Naive thymus-derived CD8-positive, alpha-beta T cell (primary cell): ENCODE measurements at regions of chr20 and their contacts with region 1.

Region 1: GRCh38 chr20:6012179-6012578 is 41.7 kb downstream of the LRRN4 start:
- DNase-seq: no peak
- ATAC-seq: no peak
- H3K4me3 Mint-ChIP-seq: peak overlapping the region in 1 of 10 donors; percentile 54
- H3K27ac Mint-ChIP-seq: peak overlapping the region in 7 of 10 donors; percentile 15 to 87 (median 76)
- H3K4me1 Mint-ChIP-seq: peaks cover 27 to 64% (median 55%) of the 10 kb centered on the region in 4 donors
- H3K27me3 Mint-ChIP-seq: no peaks in the 10 kb centered on the region

Region 2: DNA sequence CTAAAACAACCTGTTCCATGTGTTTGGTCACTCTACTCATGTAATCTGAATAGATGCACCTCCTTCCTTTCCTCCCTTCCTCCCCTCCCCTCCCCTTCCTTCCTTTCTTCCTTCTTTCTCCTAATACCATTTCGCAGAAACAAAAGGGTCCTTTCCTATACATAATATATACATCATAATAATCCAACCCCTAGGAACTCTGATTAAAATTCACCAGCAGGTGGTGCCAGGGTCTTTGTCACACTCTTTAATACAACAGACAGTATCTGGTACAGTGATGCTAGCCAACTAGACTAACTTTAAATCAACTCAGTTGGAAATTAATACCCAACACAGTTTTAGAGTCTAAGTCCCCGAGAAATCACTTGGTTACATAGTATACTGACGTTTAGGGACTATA is 443.2 kb before region 1 on chr20:
- POLR2A ChIA-PET with region 1: interaction called, 11 read pairs
- DNase-seq: peak in 9 of 10 donors; percentile 19 to 74 (median 57)
- ATAC-seq: peak; percentile 80 to 93
- H3K4me3 Mint-ChIP-seq: no peak overlapping the region
- H3K27ac Mint-ChIP-seq: peak overlapping the region; percentile 22 to 91 (median 54)
- H3K4me1 Mint-ChIP-seq: peaks cover 6 to 24% (median 16%) of the 10 kb centered on the region in 4 donors
- H3K27me3 Mint-ChIP-seq: no peaks in the 10 kb centered on the region

Region 3: DNA sequence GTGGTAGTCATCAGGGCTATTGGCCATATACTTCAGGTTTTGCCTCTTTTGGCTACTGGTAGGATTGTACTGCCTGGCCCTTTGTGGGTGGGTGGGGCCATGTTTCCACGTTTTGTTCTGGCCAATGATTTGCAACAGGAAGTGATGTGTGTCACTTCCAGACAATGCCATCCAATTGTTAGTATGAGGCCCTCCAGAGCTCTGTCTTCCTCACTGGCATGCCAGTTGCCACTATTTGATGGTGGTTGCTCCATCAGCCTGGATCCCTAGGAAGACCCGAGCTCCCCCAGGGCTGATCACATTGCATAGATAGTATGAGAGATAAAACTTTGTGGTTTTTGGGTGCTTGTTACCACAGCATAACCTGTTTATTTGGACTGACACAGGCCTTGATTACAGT is 49.4 kb after region 1 on chr20:
- POLR2A ChIA-PET with region 1: no interaction called
- DNase-seq: no peak
- ATAC-seq: no peak
- H3K4me3 Mint-ChIP-seq: no peak overlapping the region
- H3K27ac Mint-ChIP-seq: no peak overlapping the region
- H3K4me1 Mint-ChIP-seq: peaks cover 0 to 8% (median under 1%) of the 10 kb centered on the region in 4 donors
- H3K27me3 Mint-ChIP-seq: peaks cover 0 to 24% (median 11%) of the 10 kb centered on the region in 5 donors

Region 4: GRCh38 chr20:6074145-6074561 is 62.0 kb after region 1 on chr20:
- POLR2A ChIA-PET with region 1: no interaction called
- DNase-seq: peak in 2 of 10 donors; percentile 10 to 24
- ATAC-seq: peak in 1 of 2 donors; percentile 72
- H3K4me3 Mint-ChIP-seq: no peak overlapping the region
- H3K27ac Mint-ChIP-seq: peak overlapping the region in 2 of 10 donors; percentile 0 to 43
- H3K4me1 Mint-ChIP-seq: peaks cover 0 to 6% (median 5%) of the 10 kb centered on the region in 4 donors
- H3K27me3 Mint-ChIP-seq: no peaks in the 10 kb centered on the region

Region 5: GRCh38 chr20:6164421-6165341 is 152.5 kb after region 1 on chr20:
- POLR2A ChIA-PET with region 1: no interaction called
- DNase-seq: no peak
- ATAC-seq: no peak
- H3K4me3 Mint-ChIP-seq: no peak overlapping the region
- H3K27ac Mint-ChIP-seq: no peak overlapping the region
- H3K4me1 Mint-ChIP-seq: no peaks in the 10 kb centered on the region
- H3K27me3 Mint-ChIP-seq: peaks cover 11 to 57% (median 17%) of the 10 kb centered on the region in 5 donors